CD4-positive, alpha-beta memory T cell (primary cell): ENCODE measurements at regions of chr2 and their contacts with region 1.

Region 1: GRCh38 chr2:224922142-224922727 is 120.0 kb downstream of the DOCK10 start:
- DNase-seq: no peak
- H3K4me3 ChIP-seq: no peak overlapping the region
- H3K4me3 Mint-ChIP-seq: peak overlapping the region in 5 of 8 donors; percentile 27 to 65 (median 44)
- H3K27ac ChIP-seq: peak overlapping the region; percentile 41
- H3K27ac Mint-ChIP-seq: peak overlapping the region; percentile 45 to 96 (median 77)
- H3K4me1 ChIP-seq: peaks cover 67% of the 10 kb centered on the region
- H3K4me1 Mint-ChIP-seq: peaks cover 50 to 57% (median 51%) of the 10 kb centered on the region in 4 donors
- H3K27me3 ChIP-seq: no peaks in the 10 kb centered on the region
- H3K27me3 Mint-ChIP-seq: no peaks in the 10 kb centered on the region

Region 2: DNA sequence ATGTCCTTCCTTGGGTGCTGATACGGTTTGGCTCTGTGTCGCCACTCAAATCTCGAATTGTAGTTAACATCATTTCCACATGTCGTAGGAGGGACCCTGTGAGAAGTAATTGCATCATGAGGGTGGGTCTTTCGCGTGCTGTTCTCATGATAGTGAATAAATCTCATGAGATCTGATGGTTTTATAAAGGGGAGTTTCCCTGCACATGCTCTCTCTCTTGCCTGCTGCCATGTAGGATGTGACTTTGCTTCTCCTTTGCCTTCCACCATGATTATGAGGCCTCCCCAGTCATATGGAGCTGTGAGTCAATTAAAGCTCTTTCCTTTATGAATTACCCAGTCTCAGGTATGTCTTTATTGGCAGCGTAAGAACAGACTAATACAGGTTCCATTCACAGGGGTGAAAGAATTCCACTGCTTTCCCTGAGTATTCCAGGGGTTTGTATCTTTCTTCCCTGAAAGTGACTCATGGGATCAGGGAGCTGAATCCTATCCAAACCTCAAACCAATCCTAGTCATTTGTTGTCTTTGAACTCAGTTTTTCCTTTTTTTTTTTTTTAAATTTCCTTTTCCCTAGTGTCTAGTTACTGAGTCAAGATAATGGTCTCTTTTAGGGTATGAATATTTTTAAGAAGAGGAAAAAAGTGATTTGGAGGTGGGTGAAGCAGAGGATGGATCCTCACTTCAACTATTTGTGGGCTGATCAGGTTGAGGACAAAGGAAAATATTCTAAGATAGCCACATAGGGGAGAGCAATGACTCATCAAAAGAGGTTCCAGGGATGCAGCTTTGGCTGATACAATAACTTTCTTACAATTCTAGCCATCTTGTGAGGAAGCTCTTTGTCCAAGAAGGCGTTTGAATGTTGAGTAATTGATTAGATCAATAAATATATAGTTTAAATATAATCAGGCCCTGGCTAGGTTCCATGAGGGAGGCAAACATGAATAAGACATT is 1889.8 kb before region 1 on chr2:
- CTCF ChIA-PET with region 1: no interaction called
- POLR2A ChIA-PET with region 1: no interaction called
- intact Hi-C with region 1: no loop called
- DNase-seq: no peak
- H3K4me3 ChIP-seq: no peak overlapping the region
- H3K4me3 Mint-ChIP-seq: no peak overlapping the region
- H3K27ac ChIP-seq: no peak overlapping the region
- H3K27ac Mint-ChIP-seq: no peak overlapping the region
- H3K4me1 ChIP-seq: no peaks in the 10 kb centered on the region
- H3K4me1 Mint-ChIP-seq: no peaks in the 10 kb centered on the region
- H3K27me3 ChIP-seq: no peaks in the 10 kb centered on the region
- H3K27me3 Mint-ChIP-seq: peaks cover 0 to 6% of the 10 kb centered on the region in 2 donors

Region 3: DNA sequence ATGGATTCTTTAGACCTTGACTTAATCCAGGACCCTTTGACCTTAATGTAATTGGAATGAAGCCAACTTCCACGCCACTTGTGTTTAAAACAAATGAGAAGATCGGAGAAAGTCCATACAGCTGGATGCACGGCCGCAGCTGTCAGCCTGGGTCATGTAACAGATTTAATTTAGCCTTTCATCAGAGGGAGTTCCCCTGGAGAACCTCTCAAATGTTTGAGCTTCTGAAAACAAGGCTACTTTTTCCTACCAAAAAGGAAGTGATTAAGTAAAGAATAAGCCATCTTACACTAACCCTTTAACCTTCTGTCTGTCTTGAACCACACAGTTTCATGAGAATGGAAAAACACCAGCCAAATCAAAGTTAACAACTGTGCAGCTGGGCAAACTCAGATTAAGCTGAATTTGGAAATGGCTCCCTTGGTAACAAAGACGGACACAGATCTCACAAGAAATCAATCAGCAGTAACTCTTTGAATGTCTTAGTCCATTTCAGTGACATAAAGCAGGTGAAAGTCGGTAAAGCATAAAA is 16.5 kb after region 1 on chr2:
- CTCF ChIA-PET with region 1: interaction called, 9 read pairs
- POLR2A ChIA-PET with region 1: interaction called, 279 read pairs
- intact Hi-C with region 1: no loop called
- DNase-seq: peak in 1 of 5 donors; percentile 66
- H3K4me3 ChIP-seq: peak overlapping the region in 1 of 2 donors; percentile 3
- H3K4me3 Mint-ChIP-seq: peak overlapping the region; percentile 13 to 79 (median 66)
- H3K27ac ChIP-seq: peak overlapping the region; percentile 44
- H3K27ac Mint-ChIP-seq: peak overlapping the region; percentile 69 to 94 (median 83)
- H3K4me1 ChIP-seq: peaks cover 94% of the 10 kb centered on the region
- H3K4me1 Mint-ChIP-seq: peaks cover 62 to 90% (median 75%) of the 10 kb centered on the region in 4 donors
- H3K27me3 ChIP-seq: no peaks in the 10 kb centered on the region
- H3K27me3 Mint-ChIP-seq: no peaks in the 10 kb centered on the region